Gastrocnemius medialis (tissue), 4 donors: ENCODE measurements at regions of chrX and their contacts with region 1.

Region 1: GRCh38 chrX:67050760-67051159 is 411.9 kb upstream of the EDA2R start:
- DNase-seq: no peak
- ATAC-seq: no peak
- H3K4me3 ChIP-seq: no peak overlapping the region
- H3K27ac ChIP-seq: no peak overlapping the region
- H3K4me1 ChIP-seq: no peaks in the 10 kb centered on the region
- H3K27me3 ChIP-seq: peaks cover 0 to 2% (median 0%) of the 10 kb centered on the region in 3 donors
- CTCF ChIP-seq: no peak
- POLR2A ChIP-seq: no peak

Region 2: GRCh38 chrX:66961665-66962064 is 89.1 kb before region 1 on chrX:
- in situ Hi-C with region 1: loop called in 1 of 4 experiments (anchors 25 kb)
- intact Hi-C with region 1: no loop called
- DNase-seq: no peak
- ATAC-seq: no peak
- H3K4me3 ChIP-seq: no peak overlapping the region
- H3K27ac ChIP-seq: no peak overlapping the region
- H3K4me1 ChIP-seq: no peaks in the 10 kb centered on the region
- H3K27me3 ChIP-seq: no peaks in the 10 kb centered on the region
- CTCF ChIP-seq: no peak
- POLR2A ChIP-seq: no peak